Activated B cell treated with CpG ODN at 0.5 μM for 24 hours (primary cell): ENCODE measurements at regions of chr6 and their contacts with region 1.

Region 1: DNA sequence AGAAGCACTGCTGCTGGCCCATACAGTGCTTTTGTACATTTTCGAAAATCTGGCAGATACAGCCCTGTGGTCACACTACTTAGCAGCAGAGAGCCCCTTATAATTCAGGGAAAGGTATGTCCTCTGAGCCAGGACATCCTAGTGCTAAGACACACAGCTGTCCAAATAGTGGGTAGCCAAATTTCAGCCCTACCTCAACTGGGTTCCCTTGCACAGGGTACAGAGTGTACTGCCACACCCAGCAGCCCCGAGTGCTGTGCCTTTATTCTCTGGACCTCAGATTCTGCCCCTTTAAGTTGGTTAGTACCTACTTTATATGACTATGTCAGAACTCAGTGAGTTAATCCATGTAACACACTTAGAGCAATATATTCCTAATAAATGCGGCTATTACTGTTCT is 47.6 kb downstream of the PRPH2 start:
- DNase-seq: no peak
- ATAC-seq: no peak
- H3K4me3 Mint-ChIP-seq: no peak overlapping the region
- H3K27ac Mint-ChIP-seq: no peak overlapping the region
- H3K4me1 Mint-ChIP-seq: no peaks in the 10 kb centered on the region
- H3K27me3 Mint-ChIP-seq: no peaks in the 10 kb centered on the region
- CTCF ChIP-seq: no peak

Region 2: GRCh38 chr6:41408576-41408975 is 1266.2 kb before region 1 on chr6:
- CTCF ChIA-PET with region 1: no interaction called
- POLR2A ChIA-PET with region 1: no interaction called
- intact Hi-C with region 1: no loop called
- DNase-seq: no peak
- ATAC-seq: no peak
- H3K4me3 Mint-ChIP-seq: no peak overlapping the region
- H3K27ac Mint-ChIP-seq: no peak overlapping the region
- H3K4me1 Mint-ChIP-seq: no peaks in the 10 kb centered on the region
- H3K27me3 Mint-ChIP-seq: peaks cover 32% of the 10 kb centered on the region
- CTCF ChIP-seq: no peak

Region 3: DNA sequence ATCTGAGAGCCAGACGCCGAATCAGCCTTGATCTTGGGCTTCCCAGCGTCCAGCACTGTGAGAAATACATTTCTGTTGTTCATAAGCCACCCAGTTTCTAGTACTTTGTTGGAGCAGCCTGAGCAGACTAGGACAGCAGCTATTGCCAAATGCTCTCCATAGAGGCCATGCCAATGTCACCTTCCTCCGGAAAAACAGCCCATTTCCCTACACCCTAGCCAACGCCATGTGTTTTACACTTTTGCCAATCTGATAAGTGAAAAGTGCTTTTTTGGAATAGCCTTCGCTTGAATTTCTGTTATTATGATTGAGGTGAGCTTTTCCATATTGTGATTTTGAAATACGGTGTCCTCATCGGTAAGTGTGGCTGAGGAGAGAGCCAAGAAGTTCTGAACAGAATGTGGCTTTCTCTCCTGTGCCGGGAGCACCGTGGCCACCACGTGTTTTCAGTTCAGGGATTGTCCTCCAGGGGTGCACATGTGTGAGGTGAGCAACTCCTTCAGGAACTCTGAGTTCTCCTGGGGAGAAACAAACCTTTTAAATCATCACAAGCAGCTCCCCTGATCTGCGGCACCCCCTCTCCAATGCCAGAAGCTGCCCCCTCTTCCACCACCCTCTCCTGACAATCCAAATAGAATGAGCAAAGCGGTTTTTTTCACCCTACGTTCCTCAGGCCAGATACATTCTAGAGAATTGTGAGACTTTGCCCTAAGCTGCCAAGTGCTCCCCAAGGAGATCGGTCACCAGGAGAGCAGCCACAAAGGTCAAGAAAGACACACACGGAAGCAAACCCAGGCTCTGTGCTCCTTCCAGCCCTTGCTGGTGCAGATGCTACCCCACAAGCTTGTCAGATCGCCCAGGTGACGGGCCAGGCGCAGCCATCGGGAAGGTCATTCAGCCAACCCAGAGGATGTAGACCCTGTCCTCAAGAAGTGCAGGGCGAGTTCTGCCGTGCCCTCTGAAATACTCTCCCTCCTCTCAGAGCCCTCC is 588.4 kb before region 1 on chr6:
- CTCF ChIA-PET with region 1: no interaction called
- POLR2A ChIA-PET with region 1: no interaction called
- intact Hi-C with region 1: no loop called
- DNase-seq: no peak
- ATAC-seq: no peak
- H3K4me3 Mint-ChIP-seq: no peak overlapping the region
- H3K27ac Mint-ChIP-seq: no peak overlapping the region
- H3K4me1 Mint-ChIP-seq: peaks cover 6% of the 10 kb centered on the region
- H3K27me3 Mint-ChIP-seq: no peaks in the 10 kb centered on the region
- CTCF ChIP-seq: no peak

Region 4: DNA sequence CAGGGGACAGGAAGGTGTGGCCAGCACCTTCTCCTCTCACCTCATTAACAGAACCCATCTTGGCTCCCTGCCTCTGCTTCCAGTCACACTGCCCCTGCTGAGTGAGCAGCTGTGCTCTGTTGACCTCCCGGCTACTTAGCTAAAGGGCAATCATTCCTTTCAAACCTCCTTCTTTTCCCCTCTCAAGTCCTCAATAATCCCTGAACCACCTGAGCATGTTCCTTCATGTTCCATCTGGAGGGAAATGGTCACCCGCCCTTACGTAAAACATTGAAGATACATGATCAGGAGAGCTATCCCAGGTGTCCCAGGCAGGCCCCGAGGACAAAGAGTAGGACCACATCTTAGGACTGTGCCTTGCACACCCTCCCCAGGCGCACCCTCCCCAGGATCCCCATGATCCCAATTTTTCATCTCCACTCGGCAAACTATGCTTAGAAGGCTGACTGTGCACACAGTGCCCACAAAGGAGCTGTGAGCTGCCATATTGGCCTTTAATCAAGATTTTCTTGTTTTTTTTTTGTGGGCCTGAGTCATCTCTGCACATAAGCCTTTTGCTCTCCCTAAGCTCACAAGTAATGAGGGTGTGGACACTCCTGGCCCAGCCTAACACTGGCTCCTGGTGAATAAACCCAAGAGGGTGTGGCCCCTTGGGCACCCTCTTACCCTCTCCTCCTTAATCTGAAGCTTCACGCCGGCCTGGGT is 435.3 kb before region 1 on chr6:
- CTCF ChIA-PET with region 1: no interaction called
- POLR2A ChIA-PET with region 1: no interaction called
- intact Hi-C with region 1: no loop called
- DNase-seq: no peak
- ATAC-seq: no peak
- H3K4me3 Mint-ChIP-seq: no peak overlapping the region
- H3K27ac Mint-ChIP-seq: no peak overlapping the region
- H3K4me1 Mint-ChIP-seq: peaks cover 13% of the 10 kb centered on the region
- H3K27me3 Mint-ChIP-seq: no peaks in the 10 kb centered on the region
- CTCF ChIP-seq: no peak

Region 5: GRCh38 chr6:42661540-42662153 is 13.1 kb before region 1 on chr6:
- CTCF ChIA-PET with region 1: interaction called, 11 read pairs
- POLR2A ChIA-PET with region 1: no interaction called
- intact Hi-C with region 1: no loop called
- DNase-seq: peak; percentile 65
- ATAC-seq: peak; percentile 96
- H3K4me3 Mint-ChIP-seq: no peak overlapping the region
- H3K27ac Mint-ChIP-seq: no peak overlapping the region
- H3K4me1 Mint-ChIP-seq: no peaks in the 10 kb centered on the region
- H3K27me3 Mint-ChIP-seq: no peaks in the 10 kb centered on the region
- CTCF ChIP-seq: peak; percentile 74